ENCODE measurements at regions of chr20 and their contacts with region 1.

Region 1: GRCh38 chr20:43465625-43465943 is 7.9 kb downstream of the SRSF6 start:
- DNase-seq: no peak
- H3K4me3 ChIP-seq: no peak overlapping the region
- H3K27ac ChIP-seq: no peak overlapping the region
- H3K4me1 ChIP-seq: no peaks in the 10 kb centered on the region
- H3K27me3 ChIP-seq: no peaks in the 10 kb centered on the region
- CTCF ChIP-seq: no peak

Region 2: GRCh38 chr20:43379578-43379917 is 86.0 kb before region 1 on chr20:
- CTCF ChIA-PET with region 1: no interaction called
- POLR2A ChIA-PET with region 1: no interaction called
- intact Hi-C with region 1: no loop called
- DNase-seq: no peak
- H3K4me3 ChIP-seq: no peak overlapping the region
- H3K27ac ChIP-seq: no peak overlapping the region
- H3K4me1 ChIP-seq: no peaks in the 10 kb centered on the region
- H3K27me3 ChIP-seq: peaks cover 97% of the 10 kb centered on the region
- CTCF ChIP-seq: no peak

Region 3: GRCh38 chr20:43525021-43525420 is 59.4 kb after region 1 on chr20:
- CTCF ChIA-PET with region 1: no interaction called
- POLR2A ChIA-PET with region 1: interaction called, 12 read pairs
- intact Hi-C with region 1: no loop called
- DNase-seq: no peak
- H3K4me3 ChIP-seq: no peak overlapping the region
- H3K27ac ChIP-seq: no peak overlapping the region
- H3K4me1 ChIP-seq: no peaks in the 10 kb centered on the region
- H3K27me3 ChIP-seq: no peaks in the 10 kb centered on the region
- CTCF ChIP-seq: no peak

Region 4: DNA sequence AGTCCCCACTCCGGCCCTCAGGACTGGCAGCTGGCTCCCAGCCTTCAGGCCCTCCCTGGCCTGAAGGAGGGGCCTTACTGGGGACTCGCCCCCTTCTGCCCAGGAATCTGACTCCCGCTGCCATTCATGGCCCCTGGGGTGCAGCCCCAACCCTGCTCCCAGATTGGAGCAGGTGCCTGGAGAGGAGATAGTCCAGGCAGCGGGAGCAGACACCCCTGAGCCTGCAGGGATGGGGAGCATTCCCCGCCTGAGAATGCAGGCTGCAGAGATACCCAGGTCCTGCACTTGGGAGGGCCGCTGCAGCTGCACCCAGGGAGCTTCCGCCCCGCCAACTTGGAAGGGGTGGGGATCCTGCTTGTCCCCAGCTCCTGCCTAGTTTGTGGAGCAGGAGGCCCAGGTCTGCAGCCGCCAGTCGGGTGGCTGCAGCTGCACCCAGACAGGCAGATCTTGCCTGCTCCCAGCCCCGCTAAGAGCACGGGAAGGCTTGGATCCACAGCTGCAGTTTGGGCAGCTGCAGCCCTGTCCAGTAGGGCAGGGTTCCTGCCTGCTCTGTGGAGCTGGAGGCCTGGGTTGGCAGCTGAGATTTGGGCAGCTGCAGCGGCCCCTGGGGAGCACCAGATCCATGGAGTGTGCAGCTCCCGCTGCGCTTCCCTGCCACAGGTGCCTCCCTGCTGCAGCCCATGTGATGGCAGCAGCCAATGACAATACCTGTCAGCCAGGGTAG is 256.0 kb after region 1 on chr20:
- CTCF ChIA-PET with region 1: no interaction called
- POLR2A ChIA-PET with region 1: no interaction called
- intact Hi-C with region 1: no loop called
- DNase-seq: no peak
- H3K4me3 ChIP-seq: no peak overlapping the region
- H3K27ac ChIP-seq: no peak overlapping the region
- H3K4me1 ChIP-seq: no peaks in the 10 kb centered on the region
- H3K27me3 ChIP-seq: no peaks in the 10 kb centered on the region
- CTCF ChIP-seq: no peak

Region 5: DNA sequence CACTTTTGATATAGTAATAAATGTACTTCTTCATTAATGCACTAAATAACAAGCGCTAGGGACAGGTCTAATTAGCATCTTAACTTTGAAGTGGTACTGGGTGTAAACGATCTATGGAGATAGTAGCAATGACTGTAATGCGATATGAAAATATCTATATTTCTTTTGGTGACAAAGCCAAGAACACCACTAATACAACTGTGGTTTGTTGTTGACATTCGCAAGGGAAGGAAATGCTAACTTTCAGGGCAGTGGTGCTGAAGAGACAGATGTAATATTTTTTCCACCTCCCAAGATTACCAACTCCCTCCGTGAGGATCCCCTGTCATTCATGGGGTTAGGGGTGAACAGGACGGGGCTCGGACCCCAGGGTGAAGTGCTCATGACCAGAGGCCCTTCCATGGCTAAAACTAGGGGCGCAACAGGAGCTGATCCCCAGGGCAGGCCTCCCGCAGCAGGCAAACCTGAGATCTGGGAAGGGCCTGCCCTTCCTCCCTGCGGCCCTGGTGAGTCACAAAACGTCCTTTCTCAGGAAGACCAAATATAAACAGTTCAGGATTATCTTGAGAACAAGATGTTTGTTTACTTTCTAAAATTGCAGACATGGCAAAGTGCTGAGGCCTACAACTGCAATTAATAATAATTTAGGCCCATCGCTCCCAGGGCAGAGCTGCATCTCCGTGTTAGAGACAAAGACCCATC is 384.1 kb after region 1 on chr20:
- CTCF ChIA-PET with region 1: no interaction called
- POLR2A ChIA-PET with region 1: no interaction called
- intact Hi-C with region 1: no loop called
- DNase-seq: peak; percentile 53 to 83
- H3K4me3 ChIP-seq: no peak overlapping the region
- H3K27ac ChIP-seq: peak overlapping the region; percentile 78
- H3K4me1 ChIP-seq: peaks cover 54% of the 10 kb centered on the region
- H3K27me3 ChIP-seq: no peaks in the 10 kb centered on the region
- CTCF ChIP-seq: no peak

Measured in PC-9 (cell line).